Testis (tissue), 5 donors: ENCODE measurements at regions of chr6 and their contacts with region 1.

Region 1: DNA sequence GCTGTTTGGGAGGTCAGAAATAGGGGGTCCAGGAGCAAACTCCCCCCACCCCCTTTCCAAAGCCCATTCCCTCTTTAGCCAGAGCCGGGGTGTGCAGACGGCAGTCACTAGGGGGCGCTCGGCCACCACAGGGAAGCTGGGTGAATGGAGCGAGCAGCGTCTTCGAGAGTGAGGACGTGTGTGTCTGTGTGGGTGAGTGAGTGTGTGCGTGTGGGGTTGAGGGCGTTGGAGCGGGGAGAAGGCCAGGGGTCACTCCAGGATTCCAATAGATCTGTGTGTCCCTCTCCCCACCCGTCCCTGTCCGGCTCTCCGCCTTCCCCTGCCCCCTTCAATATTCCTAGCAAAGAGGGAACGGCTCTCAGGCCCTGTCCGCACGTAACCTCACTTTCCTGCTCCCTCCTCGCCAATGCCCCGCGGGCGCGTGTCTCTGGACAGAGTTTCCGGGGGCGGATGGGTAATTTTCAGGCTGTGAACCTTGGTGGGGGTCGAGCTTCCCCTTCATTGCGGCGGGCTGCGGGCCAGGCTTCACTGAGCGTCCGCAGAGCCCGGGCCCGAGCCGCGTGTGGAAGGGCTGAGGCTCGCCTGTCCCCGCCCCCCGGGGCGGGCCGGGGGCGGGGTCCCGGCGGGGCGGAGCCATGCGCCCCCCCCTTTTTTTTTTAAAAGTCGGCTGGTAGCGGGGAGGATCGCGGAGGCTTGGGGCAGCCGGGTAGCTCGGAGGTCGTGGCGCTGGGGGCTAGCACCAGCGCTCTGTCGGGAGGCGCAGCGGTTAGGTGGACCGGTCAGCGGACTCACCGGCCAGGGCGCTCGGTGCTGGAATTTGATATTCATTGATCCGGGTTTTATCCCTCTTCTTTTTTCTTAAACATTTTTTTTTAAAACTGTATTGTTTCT is at the start of gene VEGFA:
- DNase-seq: peak; percentile 94
- H3K4me3 ChIP-seq: peak within 1 kb of the TSS; percentile 70 to 79
- H3K27ac ChIP-seq: peak within 1 kb of the TSS; percentile 71 to 80
- H3K4me1 ChIP-seq: peaks cover 26% of the 10 kb centered on the region
- H3K27me3 ChIP-seq: no peaks in the 10 kb centered on the region
- CTCF ChIP-seq: peak; percentile 90 to 95 (median 94)
- POLR2A ChIP-seq: peak; percentile 52
- total RNA-seq, gene VEGFA: 6.1 to 15.2 TPM

Region 2: GRCh38 chr6:43667245-43668150 is 102.3 kb before region 1 on chr6:
- intact Hi-C with region 1: loop called (anchors 10 kb)
- DNase-seq: peak; percentile 85
- H3K4me3 ChIP-seq: no peak overlapping the region
- H3K27ac ChIP-seq: no peak overlapping the region
- H3K4me1 ChIP-seq: peaks cover 35% of the 10 kb centered on the region
- H3K27me3 ChIP-seq: no peaks in the 10 kb centered on the region
- CTCF ChIP-seq: peak; percentile 57 to 86 (median 85)
- POLR2A ChIP-seq: no peak

Region 3: DNA sequence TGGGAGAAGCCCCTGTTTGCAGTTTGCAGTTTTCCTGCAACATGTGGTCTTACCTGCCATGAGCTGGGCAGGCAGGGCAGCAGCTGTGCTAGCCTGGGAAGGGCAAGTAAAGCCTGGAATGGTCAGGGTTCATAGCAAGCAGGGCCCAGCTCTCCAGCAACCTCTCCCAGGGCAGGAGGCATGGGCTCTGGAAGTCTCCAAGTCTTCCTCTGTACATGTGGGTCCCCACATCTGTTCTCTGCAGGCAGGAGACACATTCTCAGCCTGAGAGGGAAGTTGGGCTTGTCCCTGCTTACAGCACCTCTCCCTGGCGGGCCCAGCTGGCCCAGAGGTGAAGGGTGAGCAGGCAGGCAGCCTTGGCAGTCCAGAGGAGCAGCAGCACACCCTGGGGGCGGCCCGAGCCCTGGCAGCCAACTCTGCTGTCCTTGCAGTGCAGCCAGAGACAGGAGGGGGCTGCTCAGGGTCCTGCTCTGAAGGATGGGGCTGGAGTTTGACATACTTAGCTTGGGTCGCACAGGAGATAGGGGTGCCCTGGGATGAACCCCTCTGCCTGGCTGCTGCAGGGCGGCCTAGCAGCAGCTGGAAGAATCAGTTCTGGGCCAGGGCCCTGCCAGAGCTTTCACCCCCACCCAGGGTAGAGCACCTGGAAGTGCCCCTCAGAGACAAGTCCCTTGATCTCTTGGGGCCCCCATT is 181.4 kb after region 1 on chr6:
- intact Hi-C with region 1: loop called (anchors 10 kb)
- DNase-seq: peak; percentile 46
- H3K4me3 ChIP-seq: no peak overlapping the region
- H3K27ac ChIP-seq: no peak overlapping the region
- H3K4me1 ChIP-seq: peaks cover 4% of the 10 kb centered on the region
- H3K27me3 ChIP-seq: no peaks in the 10 kb centered on the region
- CTCF ChIP-seq: peak in 1 of 3 experiments; percentile 19
- POLR2A ChIP-seq: no peak

Region 4: GRCh38 chr6:44074439-44075136 is 304.8 kb after region 1 on chr6:
- intact Hi-C with region 1: loop called (anchors 2 kb)
- DNase-seq: peak; percentile 78
- H3K4me3 ChIP-seq: no peak overlapping the region
- H3K27ac ChIP-seq: peak overlapping the region; percentile 62 to 91
- H3K4me1 ChIP-seq: peaks cover 27% of the 10 kb centered on the region
- H3K27me3 ChIP-seq: no peaks in the 10 kb centered on the region
- CTCF ChIP-seq: peak; percentile 81 to 91 (median 90)
- POLR2A ChIP-seq: no peak

Region 5: DNA sequence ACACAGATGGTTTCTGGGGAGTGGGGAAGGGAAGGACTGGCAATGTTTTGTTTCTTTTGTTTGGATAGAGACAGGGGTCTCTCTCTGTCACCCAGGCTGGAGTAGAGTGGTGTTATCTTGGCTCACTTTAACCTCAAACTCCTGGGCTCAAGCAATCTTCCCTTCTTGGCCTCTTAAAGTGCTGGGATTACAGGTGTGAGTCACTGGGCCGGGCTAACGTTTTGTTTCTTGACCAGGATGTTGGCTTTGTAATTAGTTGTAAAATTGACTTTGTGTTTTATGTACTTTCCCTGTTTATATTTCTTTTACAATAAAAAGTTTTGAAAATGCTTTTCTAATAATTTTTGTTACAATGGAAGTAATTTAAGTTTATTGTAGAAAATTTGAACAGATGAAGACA is 583.6 kb after region 1 on chr6:
- intact Hi-C with region 1: no loop called
- DNase-seq: no peak
- H3K4me3 ChIP-seq: no peak overlapping the region
- H3K27ac ChIP-seq: no peak overlapping the region
- H3K4me1 ChIP-seq: no peaks in the 10 kb centered on the region
- H3K27me3 ChIP-seq: no peaks in the 10 kb centered on the region
- CTCF ChIP-seq: no peak
- POLR2A ChIP-seq: no peak